ENCODE measurements at regions of chr17 and their contacts with region 1.

Region 1: DNA sequence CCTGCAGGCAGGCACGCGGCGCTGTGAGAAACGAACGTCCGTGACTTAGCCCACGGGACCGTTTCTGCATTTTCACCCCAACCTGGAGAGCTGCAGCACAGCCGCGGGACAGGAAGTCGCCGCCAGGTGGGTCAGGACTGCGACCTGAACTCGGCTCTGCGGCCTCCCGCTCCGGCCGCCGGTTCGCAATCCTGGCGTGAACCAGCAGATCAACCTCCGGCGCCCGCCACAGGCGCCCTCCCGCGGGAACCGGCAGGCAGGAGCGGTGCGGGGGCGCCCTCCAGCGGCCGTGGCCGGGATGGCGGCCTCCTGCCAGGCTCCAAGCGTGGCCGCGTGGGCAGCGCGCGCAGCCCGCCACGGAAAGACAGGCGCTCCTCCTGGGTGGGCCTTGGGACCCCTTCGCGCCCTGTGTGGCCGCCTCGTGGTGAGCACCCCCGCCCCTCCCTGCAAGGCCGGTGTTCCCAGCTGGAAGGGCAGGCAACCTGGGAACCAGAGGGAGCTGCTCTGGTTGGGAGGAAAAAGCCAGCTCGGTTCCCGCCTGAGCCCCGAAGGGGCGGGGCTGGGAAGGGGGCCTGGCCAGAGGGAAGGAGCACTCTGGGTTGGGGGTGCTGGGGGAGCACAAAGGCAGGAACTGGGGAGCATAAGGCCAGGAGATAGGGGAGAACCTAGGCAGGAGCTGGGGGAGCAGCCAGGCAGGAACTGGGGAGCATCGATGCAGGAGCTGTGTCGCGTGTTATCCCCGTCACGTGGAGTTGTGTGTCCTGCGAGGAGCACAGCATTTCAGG is 28.2 kb downstream of the ACTG1 start:
- DNase-seq: peak; percentile 49 to 93
- H3K4me3 ChIP-seq: peak overlapping the region; percentile 51 to 62
- H3K27ac ChIP-seq: no peak overlapping the region
- H3K4me1 ChIP-seq: peaks cover 11 to 37% of the 10 kb centered on the region in 2 donors
- H3K27me3 ChIP-seq: no peaks in the 10 kb centered on the region
- CTCF ChIP-seq: peak; percentile 86 to 100 (median 90)

Region 2: GRCh38 chr17:81294856-81295680 is 189.3 kb before region 1 on chr17 and contains the start of gene SLC38A10:
- intact Hi-C with region 1: loop called (anchors 1 kb)
- DNase-seq: peak; percentile 70 to 95
- H3K4me3 ChIP-seq: peak within 1 kb of the TSS; percentile 84 to 99
- H3K27ac ChIP-seq: peak within 1 kb of the TSS; percentile 88 to 97
- H3K4me1 ChIP-seq: peaks cover 12 to 20% of the 10 kb centered on the region in 2 donors
- H3K27me3 ChIP-seq: no peaks in the 10 kb centered on the region
- CTCF ChIP-seq: no peak
- total RNA-seq, gene SLC38A10: 261 TPM

Region 3: DNA sequence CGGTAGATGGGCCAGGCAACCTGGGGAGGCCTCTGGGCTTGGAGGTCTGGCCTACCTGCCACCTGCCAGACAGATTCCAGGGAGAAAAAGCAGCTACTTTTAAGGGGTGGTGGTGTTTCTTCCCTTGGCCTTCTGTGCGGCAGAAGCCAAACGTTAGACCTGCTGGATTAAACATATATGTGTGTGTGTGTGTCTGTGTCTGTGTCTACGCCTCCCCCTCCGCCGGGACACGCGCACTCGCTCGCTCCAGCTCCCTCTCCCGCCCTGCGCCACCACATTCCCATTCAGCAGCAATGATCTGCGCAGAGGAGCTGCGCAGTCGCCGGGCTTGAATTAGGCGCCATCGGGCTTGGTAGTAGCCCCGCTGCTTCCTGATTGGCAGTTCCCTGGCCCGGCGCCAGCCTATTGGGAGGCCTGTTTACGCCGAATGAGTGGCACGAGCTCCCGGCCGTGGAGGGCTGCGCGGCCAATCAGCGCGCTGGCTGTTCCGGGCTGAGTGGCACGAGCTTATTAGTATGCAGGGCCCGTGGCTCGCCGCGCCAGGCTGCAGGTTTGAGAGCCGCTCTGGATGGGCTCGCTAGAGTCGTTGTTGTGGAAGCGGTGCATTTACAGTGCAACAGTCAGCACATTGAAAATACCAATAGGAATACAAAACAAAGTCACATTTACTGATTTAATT is 89.3 kb before region 1 on chr17 and contains the start of gene BAHCC1:
- intact Hi-C with region 1: loop called (anchors 1 kb)
- DNase-seq: peak; percentile 100
- H3K4me3 ChIP-seq: peak within 1 kb of the TSS; percentile 81 to 93
- H3K27ac ChIP-seq: peak within 1 kb of the TSS; percentile 94 to 97
- H3K4me1 ChIP-seq: peaks cover 14 to 22% of the 10 kb centered on the region in 2 donors
- H3K27me3 ChIP-seq: no peaks in the 10 kb centered on the region
- CTCF ChIP-seq: no peak
- total RNA-seq, gene BAHCC1: 29.1 TPM

Region 4: DNA sequence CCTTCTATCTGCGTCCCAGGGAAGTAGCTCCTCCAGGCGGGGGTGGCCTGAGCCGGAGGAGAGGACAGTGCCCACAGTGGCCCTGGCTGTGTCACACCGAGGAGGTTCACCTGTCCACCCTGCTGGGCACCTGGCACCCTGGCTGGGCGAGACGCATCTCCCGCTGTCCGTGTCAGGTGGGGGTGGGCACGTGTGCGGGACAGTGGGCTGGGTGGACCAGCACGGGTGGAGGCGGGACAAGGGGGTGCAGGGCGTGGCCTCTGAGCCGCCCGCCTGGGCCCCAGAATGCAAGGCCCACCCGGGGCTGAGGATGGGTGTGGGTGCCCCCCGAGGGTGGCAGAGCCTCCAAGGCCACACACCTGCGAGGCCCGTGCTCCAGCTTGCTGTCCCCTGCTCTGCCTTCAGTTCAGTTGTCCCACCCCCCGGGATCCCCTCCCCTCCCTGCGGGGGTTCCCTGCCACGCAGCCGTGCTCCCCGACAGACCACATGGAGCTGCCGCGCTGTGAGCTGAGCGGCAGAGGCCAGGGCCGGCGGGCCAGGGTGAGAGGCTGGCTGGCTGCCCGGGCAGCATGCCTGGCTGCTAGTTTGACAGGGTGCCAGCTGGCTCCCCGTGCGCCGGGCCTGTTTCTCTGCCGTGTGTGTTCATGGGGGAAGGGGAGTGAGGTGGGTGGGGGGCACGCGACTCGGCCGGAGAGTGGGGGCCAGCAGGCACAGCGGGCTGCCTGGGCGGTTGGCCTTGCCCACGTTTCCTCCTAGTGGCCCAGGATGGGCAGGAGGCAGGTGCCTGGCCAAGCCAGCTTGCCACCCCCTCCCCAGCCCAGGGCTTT is 55.2 kb before region 1 on chr17:
- intact Hi-C with region 1: loop called (anchors 2 kb)
- DNase-seq: peak in 1 of 2 donors; percentile 88
- H3K4me3 ChIP-seq: peak overlapping the region; percentile 37 to 50
- H3K27ac ChIP-seq: peak overlapping the region; percentile 70 to 75
- H3K4me1 ChIP-seq: peaks cover 30 to 50% of the 10 kb centered on the region in 2 donors
- H3K27me3 ChIP-seq: no peaks in the 10 kb centered on the region
- CTCF ChIP-seq: no peak